ENCODE measurements at regions of chr15 and their contacts with region 1.

Region 1: GRCh38 chr15:100671858-100672543 is 69.6 kb downstream of the ASB7 start:
- DNase-seq: no peak
- ATAC-seq: peak in 3 of 4 donors; percentile 52 to 62 (median 62)
- H3K4me3 ChIP-seq: no peak overlapping the region
- H3K27ac ChIP-seq: no peak overlapping the region
- H3K4me1 ChIP-seq: peaks cover 0 to 13% (median 2%) of the 10 kb centered on the region in 12 donors
- H3K27me3 ChIP-seq: peaks cover 0 to 3% (median 0%) of the 10 kb centered on the region in 9 donors
- CTCF ChIP-seq: peak in 10 of 12 donors; percentile 11 to 58 (median 38)
- POLR2A ChIP-seq: no peak

Region 2: DNA sequence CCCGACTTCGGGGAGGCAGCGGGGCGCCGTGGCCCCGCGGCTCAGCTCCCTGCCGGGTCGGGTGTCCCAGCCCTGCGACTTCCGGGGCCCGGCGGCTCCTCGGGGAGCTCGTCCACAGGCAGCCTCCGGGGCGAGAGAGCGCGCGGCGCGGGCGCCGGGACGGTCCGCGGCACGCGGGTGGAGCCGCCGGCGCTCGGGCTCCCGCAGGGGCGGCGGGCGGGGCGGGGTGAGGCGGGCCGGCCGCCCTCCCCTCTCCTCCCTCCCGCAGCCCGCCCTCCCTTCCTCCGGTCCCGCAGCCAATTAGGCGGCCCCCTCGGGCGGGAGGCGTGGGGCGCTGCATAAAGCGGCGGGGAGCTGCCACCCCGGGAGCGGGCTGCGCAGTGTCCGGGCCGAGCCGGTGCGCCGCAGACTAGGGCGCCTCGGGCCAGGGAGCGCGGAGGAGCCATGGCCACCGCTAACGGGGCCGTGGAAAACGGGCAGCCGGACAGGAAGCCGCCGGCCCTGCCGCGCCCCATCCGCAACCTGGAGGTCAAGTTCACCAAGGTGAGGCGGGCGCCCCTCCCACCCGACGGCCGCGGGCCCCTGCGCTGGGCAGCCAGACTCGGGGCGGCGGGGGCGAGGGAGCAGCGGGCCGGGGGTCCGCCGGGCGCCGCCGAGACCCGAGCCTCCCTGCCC is 207.6 kb after region 1 on chr15 and contains the start of gene ALDH1A3:
- intact Hi-C with region 1: loop called in 2 of 10 experiments (anchors 5 kb)
- DNase-seq: peak in 3 of 5 donors; percentile 23 to 56 (median 40)
- ATAC-seq: peak in 3 of 4 donors; percentile 61 to 82 (median 67)
- H3K4me3 ChIP-seq: peak within 1 kb of the TSS; percentile 18 to 65 (median 53)
- H3K27ac ChIP-seq: peak within 1 kb of the TSS in 1 of 12 donors; percentile 40
- H3K4me1 ChIP-seq: peaks cover 0 to 21% (median 1%) of the 10 kb centered on the region in 12 donors
- H3K27me3 ChIP-seq: peaks cover 9 to 73% (median 35%) of the 10 kb centered on the region in 9 donors
- CTCF ChIP-seq: no peak
- POLR2A ChIP-seq: no peak
- total RNA-seq, gene ALDH1A3: 0.82 to 37.1 (median 4.7) TPM